Activated T-helper 1 cell treated with anti-CD3 and anti-CD28 coated beads, Interleukin-12 subunit alpha, Interleukin-12 subunit beta, Interleukin-2, Interleukin-4 antibody, amounts not matched to agents 30 ng/mL and 10 ng/mL and 1 ng/mL, durations not matched to agents 14 hours and 24 hours and 36 hours (primary cell): ENCODE measurements at regions of chr1 and their contacts with region 1.

Region 1: DNA sequence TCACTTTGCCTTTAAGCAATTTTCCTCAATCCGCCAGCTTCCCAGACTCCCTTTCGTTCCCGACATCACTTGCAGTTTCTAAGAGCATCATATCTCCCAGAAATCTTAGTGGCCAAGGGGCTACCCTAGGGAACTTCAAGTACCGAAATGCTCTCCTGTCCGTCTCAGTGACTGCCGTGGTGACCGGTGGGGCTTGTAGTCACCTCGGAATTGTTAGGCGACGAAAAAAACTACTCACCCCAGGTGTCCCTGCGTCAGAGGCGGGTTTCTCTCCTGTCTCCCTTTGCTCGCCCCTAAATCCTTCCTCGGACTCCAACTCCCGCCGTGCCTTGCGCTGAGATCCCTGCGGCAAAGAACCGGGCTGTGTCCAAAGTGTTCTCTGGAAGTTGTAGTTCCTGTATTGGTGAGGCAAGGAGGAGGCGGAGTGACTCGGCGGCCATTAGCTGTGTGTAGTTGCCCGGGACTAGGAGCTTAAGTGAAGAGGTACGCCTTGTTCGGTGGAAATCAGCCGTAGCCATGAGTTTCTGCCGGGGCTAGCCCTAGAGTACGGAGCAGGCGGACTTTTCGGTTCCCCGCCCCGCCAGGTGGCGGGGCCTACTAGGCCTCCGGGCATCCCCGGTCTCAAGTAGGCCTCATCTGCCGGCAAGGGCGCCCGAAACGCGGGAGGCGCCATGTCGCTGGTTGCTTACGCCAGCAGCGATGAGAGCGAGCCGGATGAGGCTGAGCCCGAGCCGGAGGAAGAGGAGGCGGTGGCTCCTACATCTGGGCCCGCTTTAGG is at the start of gene PRCC:
- DNase-seq: peak; percentile 97
- H3K4me3 Mint-ChIP-seq: no peak within 1 kb of the TSS
- H3K27ac Mint-ChIP-seq: no peak within 1 kb of the TSS
- H3K4me1 Mint-ChIP-seq: peaks cover 46% of the 10 kb centered on the region
- H3K27me3 Mint-ChIP-seq: no peaks in the 10 kb centered on the region
- total RNA-seq, gene PRCC: 117 TPM in 2 replicates

Region 2: DNA sequence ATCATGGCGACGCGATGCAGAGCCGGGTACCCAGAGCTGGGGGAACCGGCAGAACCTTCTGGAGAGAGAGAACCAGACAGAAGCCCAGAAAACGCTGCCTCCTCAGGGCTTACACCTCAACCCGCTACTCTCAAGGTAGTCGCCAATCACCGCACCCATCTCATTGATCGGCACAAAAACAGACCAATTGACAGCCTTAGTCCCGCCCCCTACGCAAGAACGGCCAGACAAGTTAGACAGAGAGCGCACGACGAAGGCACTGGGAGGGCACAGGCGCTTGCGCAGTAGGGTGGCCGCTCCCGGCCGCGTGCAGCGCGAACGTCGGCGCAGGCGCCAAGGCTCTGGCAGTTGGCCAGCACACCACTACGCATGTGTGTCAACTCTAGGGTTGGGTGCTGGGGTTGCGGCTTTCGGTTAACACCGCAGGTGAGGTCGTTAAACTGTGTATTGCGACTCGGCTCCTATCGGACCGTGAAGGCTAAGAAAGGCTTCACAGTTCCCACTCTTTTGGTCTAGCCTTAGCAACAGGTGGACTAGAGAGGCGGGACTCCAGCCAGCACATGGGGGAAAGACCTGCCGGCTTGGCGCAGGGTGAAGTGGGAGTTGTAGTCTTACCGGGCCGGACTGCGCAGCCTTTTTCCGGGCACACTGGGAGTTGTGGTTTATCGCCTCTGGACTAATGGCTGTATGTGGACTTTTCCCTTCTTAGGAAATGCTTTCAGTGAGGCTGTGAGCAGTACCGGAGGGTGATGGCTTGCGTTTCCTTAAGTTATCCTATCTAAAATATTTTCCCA is 428.9 kb before region 1 on chr1 and contains the starts of genes CCT3 and TSACC:
- intact Hi-C with region 1: loop called (anchors 1 kb)
- DNase-seq: peak; percentile 99
- H3K4me3 Mint-ChIP-seq: peak within 1 kb of the TSS; percentile 98
- H3K27ac Mint-ChIP-seq: peak within 1 kb of the TSS; percentile 95
- H3K4me1 Mint-ChIP-seq: peaks cover 41% of the 10 kb centered on the region
- H3K27me3 Mint-ChIP-seq: peaks cover 5% of the 10 kb centered on the region
- total RNA-seq, gene CCT3: 567 and 570 TPM in 2 replicates
- total RNA-seq, gene TSACC: 0.81 TPM in 1 of 2 replicates, not detected in the other

Region 3: DNA sequence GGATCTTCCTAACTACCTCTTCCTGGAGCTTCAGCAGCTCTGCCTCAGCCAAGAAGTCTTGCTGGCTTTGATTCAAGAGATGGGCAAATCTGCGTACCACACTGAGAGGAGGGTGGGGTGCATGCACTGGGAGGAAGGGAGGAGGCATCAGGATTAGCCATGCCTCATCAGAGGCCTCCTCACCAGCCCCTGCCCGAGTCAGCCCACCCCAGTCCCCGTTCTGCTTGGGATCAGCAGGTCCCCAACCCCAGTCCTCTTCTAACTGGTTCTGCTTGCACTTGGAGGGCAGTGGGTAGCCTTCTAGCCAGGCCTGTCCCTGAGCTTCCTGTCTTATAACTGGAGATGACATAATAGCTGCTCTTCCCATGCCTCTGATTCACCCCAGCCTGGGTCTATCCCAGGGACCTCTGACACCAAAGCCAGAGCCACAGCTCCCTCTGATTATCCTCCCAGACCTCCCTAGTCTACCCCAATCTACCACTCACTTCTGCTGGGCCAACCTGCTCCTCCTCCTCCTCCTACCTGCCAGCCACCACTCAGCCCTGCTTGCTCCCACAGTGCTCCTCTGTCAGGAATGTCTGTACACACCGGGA is 226.4 kb before region 1 on chr1:
- intact Hi-C with region 1: no loop called
- DNase-seq: no peak
- H3K4me3 Mint-ChIP-seq: no peak overlapping the region
- H3K27ac Mint-ChIP-seq: peak overlapping the region; percentile 13
- H3K4me1 Mint-ChIP-seq: peaks cover 11% of the 10 kb centered on the region
- H3K27me3 Mint-ChIP-seq: no peaks in the 10 kb centered on the region

Region 4: GRCh38 chr1:156659994-156660751 is 107.1 kb before region 1 on chr1:
- intact Hi-C with region 1: loop called (anchors 2 kb)
- DNase-seq: peak; percentile 88
- H3K4me3 Mint-ChIP-seq: peak overlapping the region; percentile 86
- H3K27ac Mint-ChIP-seq: peak overlapping the region; percentile 89
- H3K4me1 Mint-ChIP-seq: peaks cover 51% of the 10 kb centered on the region
- H3K27me3 Mint-ChIP-seq: peaks cover 25% of the 10 kb centered on the region

Region 5: GRCh38 chr1:156740679-156741612 is 26.3 kb before region 1 on chr1 and contains the start of gene MRPL24:
- intact Hi-C with region 1: loop called (anchors 1 kb)
- DNase-seq: peak; percentile 97
- H3K4me3 Mint-ChIP-seq: peak within 1 kb of the TSS; percentile 93
- H3K27ac Mint-ChIP-seq: peak within 1 kb of the TSS; percentile 94
- H3K4me1 Mint-ChIP-seq: peaks cover 54% of the 10 kb centered on the region
- H3K27me3 Mint-ChIP-seq: no peaks in the 10 kb centered on the region
- total RNA-seq, gene MRPL24: 132 and 135 TPM in 2 replicates

Region 6: DNA sequence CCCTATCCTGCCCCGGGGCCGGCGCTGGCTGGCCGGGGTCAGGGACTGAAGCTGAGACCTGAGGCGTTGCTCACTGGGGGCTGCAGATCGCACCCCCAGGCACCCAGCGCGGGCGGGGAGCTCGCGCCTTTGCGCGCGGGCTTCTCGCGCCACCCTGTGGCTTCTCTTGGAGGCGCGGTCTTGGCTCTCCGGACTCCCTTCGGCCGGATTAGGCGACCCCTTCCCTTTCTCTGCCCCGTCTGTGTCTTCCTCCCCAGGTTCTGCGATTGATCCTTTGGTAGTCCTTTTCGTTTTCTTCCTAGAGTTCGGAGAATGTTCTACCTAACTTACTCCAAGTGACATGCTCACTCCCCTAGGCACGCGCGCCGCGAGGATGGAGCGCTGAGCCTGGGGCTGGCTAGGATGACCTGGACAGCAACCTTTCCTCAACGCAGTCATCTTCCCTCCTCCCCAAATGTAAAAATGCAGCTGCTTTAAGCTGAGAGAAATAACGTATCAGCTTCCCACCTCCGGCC is 92.9 kb after region 1 on chr1:
- intact Hi-C with region 1: loop called (anchors 1 kb)
- DNase-seq: peak; percentile 53
- H3K4me3 Mint-ChIP-seq: peak overlapping the region; percentile 88
- H3K27ac Mint-ChIP-seq: peak overlapping the region; percentile 80
- H3K4me1 Mint-ChIP-seq: peaks cover 56% of the 10 kb centered on the region
- H3K27me3 Mint-ChIP-seq: peaks cover 15% of the 10 kb centered on the region